ENCODE measurements at regions of chr17 and their contacts with region 1.

Region 1: DNA sequence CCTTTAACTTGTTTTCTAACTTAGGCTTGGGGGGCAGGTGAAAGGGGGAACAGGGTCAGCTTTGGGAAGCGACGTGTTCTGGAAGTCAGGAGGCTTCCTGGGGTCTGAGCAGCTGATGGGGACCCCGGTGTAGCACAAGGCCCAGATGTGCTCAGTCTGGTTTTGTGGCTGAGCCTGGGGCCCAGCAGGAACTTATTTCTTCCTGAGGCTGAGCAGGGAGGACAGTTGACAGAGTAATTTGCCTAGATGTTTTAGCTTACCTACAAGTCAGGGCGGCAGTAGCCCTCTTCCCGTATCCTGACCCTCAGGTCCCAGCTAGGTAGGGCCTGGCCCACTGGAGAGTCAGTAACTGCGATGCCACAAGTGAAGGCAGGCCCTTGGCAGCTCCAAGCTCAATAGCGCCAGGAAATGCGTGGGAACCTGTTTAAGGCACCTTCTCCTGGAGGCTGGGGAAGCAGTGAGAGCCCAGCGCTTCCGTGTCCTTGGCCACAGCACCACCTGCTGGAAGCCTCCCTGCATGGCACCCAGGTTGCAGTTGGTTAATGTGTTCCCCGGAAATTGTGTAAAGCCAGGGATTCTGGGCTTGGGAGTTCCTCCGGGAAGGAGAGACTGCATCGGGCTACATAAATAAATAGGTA is 5.2 kb downstream of the CCR7 start:
- DNase-seq: peak; percentile 93
- H3K4me3 Mint-ChIP-seq: peak overlapping the region; percentile 96
- H3K27ac Mint-ChIP-seq: peak overlapping the region; percentile 100
- H3K4me1 Mint-ChIP-seq: peaks cover 66% of the 10 kb centered on the region
- H3K27me3 Mint-ChIP-seq: no peaks in the 10 kb centered on the region

Region 2: DNA sequence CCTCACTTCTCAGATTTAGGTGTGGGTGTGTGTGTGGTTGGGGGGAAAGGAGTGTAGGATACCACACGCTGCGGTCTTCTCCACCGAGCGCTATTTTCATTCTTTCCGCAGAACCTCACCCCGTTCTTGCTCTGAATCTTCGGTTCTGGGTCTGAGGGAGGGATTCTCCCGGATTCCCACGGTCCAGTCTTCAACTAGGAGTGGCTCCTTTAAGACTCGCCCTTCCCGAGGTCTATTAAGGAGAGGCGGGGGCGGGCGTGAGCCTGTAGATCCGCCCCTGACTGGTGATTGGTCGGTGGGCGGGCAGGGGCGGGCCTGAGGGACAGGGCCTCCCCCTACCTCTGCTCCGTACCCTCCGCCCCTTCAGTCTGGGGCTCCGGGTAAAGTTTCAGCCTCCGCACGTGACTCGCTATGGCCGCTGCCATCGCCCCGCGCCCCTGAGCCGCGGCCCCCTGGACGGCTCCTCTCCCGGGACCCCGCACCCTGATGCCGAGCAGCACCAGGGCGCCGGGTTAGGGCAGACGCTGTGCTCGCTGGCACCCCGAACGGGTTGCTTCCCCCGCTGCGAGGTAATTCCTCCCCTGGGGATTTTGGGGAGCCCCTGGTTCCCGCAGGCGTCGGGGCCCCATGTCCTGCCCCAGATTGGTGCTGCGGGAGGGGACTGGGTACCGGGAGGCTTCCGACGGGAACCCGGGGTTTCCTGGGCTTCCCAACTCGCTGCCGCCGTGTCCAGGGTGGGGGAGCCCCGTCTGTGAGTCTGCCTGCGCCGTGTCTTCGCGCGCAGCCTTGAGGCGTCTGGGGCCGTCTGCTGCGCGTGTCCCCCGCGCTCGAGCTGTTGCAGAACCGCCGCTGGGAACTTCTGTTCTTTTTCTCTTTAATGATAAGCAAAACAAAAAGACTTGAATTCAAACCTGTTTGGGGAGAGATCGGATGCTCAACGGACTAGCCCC is 241.9 kb before region 1 on chr17:
- CTCF ChIA-PET with region 1: no interaction called
- intact Hi-C with region 1: loop called (anchors 1 kb)
- DNase-seq: peak; percentile 94
- H3K4me3 Mint-ChIP-seq: peak overlapping the region; percentile 85
- H3K27ac Mint-ChIP-seq: peak overlapping the region; percentile 90
- H3K4me1 Mint-ChIP-seq: peaks cover 75% of the 10 kb centered on the region
- H3K27me3 Mint-ChIP-seq: no peaks in the 10 kb centered on the region

Region 3: GRCh38 chr17:40417609-40418427 is 142.3 kb before region 1 on chr17 and contains the start of gene TOP2A:
- CTCF ChIA-PET with region 1: interaction called, 6 read pairs
- intact Hi-C with region 1: loop called (anchors 1 kb)
- DNase-seq: peak; percentile 99
- H3K4me3 Mint-ChIP-seq: peak within 1 kb of the TSS; percentile 98
- H3K27ac Mint-ChIP-seq: peak within 1 kb of the TSS; percentile 90
- H3K4me1 Mint-ChIP-seq: peaks cover 26% of the 10 kb centered on the region
- H3K27me3 Mint-ChIP-seq: peaks cover 2% of the 10 kb centered on the region
- total RNA-seq, gene TOP2A: 410 to 416 TPM

Region 4: DNA sequence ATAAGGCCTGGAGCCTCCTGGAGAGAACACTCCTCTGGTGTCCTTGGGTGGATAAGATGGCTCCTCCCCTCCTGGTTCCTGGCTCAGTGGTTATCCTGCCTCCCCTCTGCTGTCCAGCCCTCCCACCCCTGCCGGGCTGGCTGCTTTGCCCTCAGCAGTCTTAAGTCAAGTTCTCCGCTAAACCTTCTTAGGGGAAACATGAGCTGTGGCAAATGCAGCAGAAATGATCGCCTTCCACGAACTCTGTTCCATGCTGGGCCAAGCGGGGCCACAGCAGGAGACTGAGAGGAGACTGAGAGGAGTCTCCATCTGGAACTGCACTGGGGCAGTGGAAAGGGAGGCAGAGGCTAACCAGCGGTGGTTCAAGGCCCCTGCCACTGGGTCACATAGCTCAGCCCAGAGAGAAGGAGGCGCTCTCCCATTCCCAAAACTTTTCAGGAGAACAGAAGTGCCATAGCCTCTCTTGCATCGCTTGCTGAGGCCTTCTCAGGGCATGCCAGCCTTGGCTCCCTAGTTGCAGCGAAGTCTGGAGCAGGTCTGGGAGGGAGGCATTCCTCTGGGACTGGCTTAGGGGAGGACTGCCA is 85.6 kb before region 1 on chr17:
- CTCF ChIA-PET with region 1: interaction called, 20 read pairs
- intact Hi-C with region 1: no loop called
- DNase-seq: no peak
- H3K4me3 Mint-ChIP-seq: no peak overlapping the region
- H3K27ac Mint-ChIP-seq: no peak overlapping the region
- H3K4me1 Mint-ChIP-seq: peaks cover 11% of the 10 kb centered on the region
- H3K27me3 Mint-ChIP-seq: no peaks in the 10 kb centered on the region

Region 5: DNA sequence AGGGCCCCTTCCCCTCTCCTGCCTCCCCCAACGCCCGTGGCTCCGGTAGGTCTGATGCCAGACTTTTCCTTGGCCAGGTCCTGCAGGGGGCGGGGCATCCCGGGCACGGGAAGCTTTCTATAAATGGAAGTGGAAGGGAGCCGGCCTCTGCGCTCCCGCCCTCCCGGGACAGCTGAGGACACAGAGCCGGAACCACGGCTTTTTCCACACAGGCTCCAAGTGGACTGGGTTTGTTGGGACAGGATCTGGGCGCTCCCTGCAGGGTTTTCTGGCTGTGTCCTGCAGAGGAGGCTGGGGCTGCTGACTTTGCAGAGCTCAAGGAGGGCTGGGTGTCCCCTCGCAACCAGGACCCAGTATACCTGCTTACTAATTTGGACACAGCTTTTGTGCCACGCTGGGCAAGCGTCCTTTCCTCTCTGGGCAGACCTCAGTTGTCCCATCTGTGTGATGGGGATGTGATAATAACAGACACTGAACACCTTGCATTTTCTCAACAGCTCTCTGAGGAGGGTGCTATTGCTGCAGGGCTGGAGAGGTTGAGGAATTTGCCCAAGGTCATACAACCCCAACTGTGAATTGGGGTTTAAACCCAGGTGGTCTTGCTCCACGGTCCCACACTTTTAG is 60.4 kb before region 1 on chr17:
- CTCF ChIA-PET with region 1: no interaction called
- intact Hi-C with region 1: no loop called
- DNase-seq: no peak
- H3K4me3 Mint-ChIP-seq: no peak overlapping the region
- H3K27ac Mint-ChIP-seq: no peak overlapping the region
- H3K4me1 Mint-ChIP-seq: no peaks in the 10 kb centered on the region
- H3K27me3 Mint-ChIP-seq: no peaks in the 10 kb centered on the region

Region 6: GRCh38 chr17:40531051-40531991 is 28.8 kb before region 1 on chr17:
- CTCF ChIA-PET with region 1: interaction called, 276 read pairs
- intact Hi-C with region 1: loop called (anchors 1 kb)
- DNase-seq: peak; percentile 95
- H3K4me3 Mint-ChIP-seq: peak overlapping the region; percentile 61
- H3K27ac Mint-ChIP-seq: peak overlapping the region; percentile 91
- H3K4me1 Mint-ChIP-seq: peaks cover 72% of the 10 kb centered on the region
- H3K27me3 Mint-ChIP-seq: no peaks in the 10 kb centered on the region

Region 7: GRCh38 chr17:40582328-40582901 is 22.3 kb after region 1 on chr17:
- CTCF ChIA-PET with region 1: interaction called, 31 read pairs
- intact Hi-C with region 1: loop called (anchors 1 kb)
- DNase-seq: peak; percentile 92
- H3K4me3 Mint-ChIP-seq: peak overlapping the region; percentile 45
- H3K27ac Mint-ChIP-seq: peak overlapping the region; percentile 71
- H3K4me1 Mint-ChIP-seq: peaks cover 86% of the 10 kb centered on the region
- H3K27me3 Mint-ChIP-seq: no peaks in the 10 kb centered on the region

Region 8: GRCh38 chr17:40622509-40622928 is 62.4 kb after region 1 on chr17:
- CTCF ChIA-PET with region 1: interaction called, 205 read pairs
- intact Hi-C with region 1: no loop called
- DNase-seq: no peak
- H3K4me3 Mint-ChIP-seq: no peak overlapping the region
- H3K27ac Mint-ChIP-seq: no peak overlapping the region
- H3K4me1 Mint-ChIP-seq: peaks cover 51% of the 10 kb centered on the region
- H3K27me3 Mint-ChIP-seq: no peaks in the 10 kb centered on the region